ENCODE measurements at regions of chr12 and their contacts with region 1.

Region 1: DNA sequence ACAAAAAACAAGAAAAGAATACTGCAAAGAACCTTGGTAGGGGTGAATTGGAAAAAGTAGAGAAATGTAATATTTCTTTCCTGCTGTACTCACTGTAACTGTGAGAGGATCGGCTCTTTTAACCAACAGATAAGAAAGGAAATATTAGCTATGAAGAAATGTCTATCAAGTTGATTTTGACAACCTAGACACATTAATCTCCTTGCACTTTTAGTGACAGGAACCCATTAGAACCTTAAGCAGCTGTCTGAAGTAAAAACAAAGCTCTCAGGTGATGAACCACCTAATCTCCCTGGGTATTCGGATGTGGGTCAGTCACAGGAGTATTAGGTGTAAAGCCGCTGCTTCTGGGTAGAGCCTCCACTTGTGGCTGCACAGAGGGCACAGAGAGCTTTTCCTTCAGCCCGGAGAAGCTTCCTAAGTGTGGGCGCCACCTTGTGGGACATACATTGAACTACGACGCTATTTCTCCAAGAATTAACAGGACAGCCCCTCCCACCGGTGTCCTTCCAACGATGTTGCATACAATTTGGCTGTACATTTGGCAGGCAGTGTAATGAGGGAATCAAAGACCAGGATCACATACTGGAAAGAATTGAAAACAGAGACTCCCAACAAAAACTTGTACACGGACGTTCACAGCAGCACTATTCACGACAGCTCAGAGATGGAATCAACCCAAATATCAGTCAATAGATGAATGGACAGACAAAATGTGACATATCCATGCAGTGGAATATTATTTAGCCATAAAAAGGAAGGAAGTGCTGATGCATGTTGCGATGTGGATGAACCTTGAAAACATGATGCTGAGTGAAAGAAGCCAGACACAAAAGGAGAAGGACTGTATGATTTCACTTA is 28.9 kb upstream of the MAPKAPK5 start:
- DNase-seq: peak; percentile 84
- ATAC-seq: peak; percentile 99
- H3K4me3 Mint-ChIP-seq: no peak overlapping the region
- H3K27ac Mint-ChIP-seq: no peak overlapping the region
- H3K4me1 Mint-ChIP-seq: peaks cover 10% of the 10 kb centered on the region
- H3K27me3 Mint-ChIP-seq: no peaks in the 10 kb centered on the region
- CTCF ChIP-seq: peak; percentile 83

Region 2: DNA sequence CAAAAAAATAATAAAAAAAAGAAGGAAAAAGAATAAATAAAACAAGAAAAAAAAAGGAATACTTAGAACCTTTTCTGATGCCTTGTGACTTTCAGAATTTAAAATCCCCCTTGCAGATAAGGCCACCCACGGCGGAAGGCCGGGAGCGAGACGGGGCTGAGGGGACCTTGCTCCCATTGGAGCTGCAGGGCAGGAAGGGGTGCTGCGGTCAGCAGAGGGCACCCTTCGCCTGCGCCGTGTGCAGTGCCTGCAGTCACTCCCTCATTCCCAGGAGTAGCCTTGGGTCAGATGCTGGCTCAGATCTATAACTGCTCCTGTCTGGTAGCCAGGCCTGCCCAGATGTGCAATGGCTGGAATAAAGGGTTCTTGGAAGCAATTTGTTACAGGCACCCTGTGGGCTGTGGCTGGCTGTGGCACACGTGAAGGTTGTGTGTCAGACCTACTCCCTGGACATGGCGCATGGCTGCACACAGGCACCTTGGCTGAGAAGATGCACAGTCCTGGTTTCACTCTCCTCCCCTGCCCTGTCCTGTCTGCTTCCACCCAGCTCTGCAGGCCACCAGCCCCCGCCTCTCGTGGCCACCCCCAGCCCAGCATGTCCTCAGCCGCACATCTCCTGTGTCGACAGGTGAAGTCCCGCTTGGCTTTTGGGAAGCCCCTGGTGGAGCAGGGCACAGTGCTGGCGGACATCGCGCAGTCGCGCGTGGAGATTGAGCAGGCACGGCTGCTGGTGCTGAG is 59.8 kb before region 1 on chr12:
- CTCF ChIA-PET with region 1: interaction called, 17 read pairs
- POLR2A ChIA-PET with region 1: no interaction called
- intact Hi-C with region 1: no loop called
- DNase-seq: no peak
- ATAC-seq: peak; percentile 46
- H3K4me3 Mint-ChIP-seq: no peak overlapping the region
- H3K27ac Mint-ChIP-seq: no peak overlapping the region
- H3K4me1 Mint-ChIP-seq: peaks cover 14% of the 10 kb centered on the region
- H3K27me3 Mint-ChIP-seq: no peaks in the 10 kb centered on the region
- CTCF ChIP-seq: peak; percentile 17

Region 3: GRCh38 chr12:111767362-111768158 is 45.6 kb before region 1 on chr12:
- CTCF ChIA-PET with region 1: interaction called, 19 read pairs
- POLR2A ChIA-PET with region 1: no interaction called
- intact Hi-C with region 1: no loop called
- DNase-seq: no peak
- ATAC-seq: no peak
- H3K4me3 Mint-ChIP-seq: peak overlapping the region; percentile 65
- H3K27ac Mint-ChIP-seq: no peak overlapping the region
- H3K4me1 Mint-ChIP-seq: peaks cover 12% of the 10 kb centered on the region
- H3K27me3 Mint-ChIP-seq: peaks cover 22% of the 10 kb centered on the region
- CTCF ChIP-seq: no peak

Region 4: GRCh38 chr12:111798182-111798581 is 14.9 kb before region 1 on chr12:
- CTCF ChIA-PET with region 1: interaction called, 26 read pairs
- POLR2A ChIA-PET with region 1: interaction called, 3 read pairs
- intact Hi-C with region 1: no loop called
- DNase-seq: no peak
- ATAC-seq: no peak
- H3K4me3 Mint-ChIP-seq: no peak overlapping the region
- H3K27ac Mint-ChIP-seq: no peak overlapping the region
- H3K4me1 Mint-ChIP-seq: no peaks in the 10 kb centered on the region
- H3K27me3 Mint-ChIP-seq: no peaks in the 10 kb centered on the region
- CTCF ChIP-seq: no peak